ENCODE measurements at regions of chr11 and their contacts with region 1.

Region 1: GRCh38 chr11:112555491-112556364 is 295.1 kb upstream of the PLET1 start:
- DNase-seq: peak; percentile 21
- ATAC-seq: peak; percentile 95
- H3K4me3 ChIP-seq: no peak overlapping the region
- H3K27ac ChIP-seq: no peak overlapping the region
- H3K4me1 ChIP-seq: no peaks in the 10 kb centered on the region
- H3K27me3 ChIP-seq: peaks cover 1 to 5% of the 10 kb centered on the region in 2 experiments; a peak in 2 of 5 replicates
- CTCF ChIP-seq: peak; percentile 83
- EP300 ChIP-seq: no peak
- POLR2A ChIP-seq: no peak
- RAD21 ChIP-seq: peak; percentile 40

Region 2: DNA sequence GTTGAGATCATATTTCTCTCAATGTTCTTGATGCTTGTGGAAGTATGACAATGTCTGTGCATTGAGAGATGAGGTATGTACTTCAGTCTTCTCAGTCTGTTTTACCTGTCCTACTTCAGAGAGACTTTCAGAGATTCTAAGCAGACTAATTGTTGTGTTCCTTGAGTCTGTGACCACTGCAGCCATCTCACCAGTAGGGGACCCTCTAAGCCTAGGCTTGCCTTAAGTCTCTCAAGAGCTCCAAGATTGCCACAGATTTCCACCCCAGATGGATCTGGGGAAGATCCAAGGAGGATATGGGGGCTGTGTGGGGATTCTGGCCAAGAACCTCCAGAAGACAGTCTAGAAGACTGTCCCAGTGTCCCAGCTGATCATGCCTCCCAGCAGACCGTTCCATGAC is 115.2 kb before region 1 on chr11:
- CTCF ChIA-PET with region 1: interaction called, 4 read pairs
- POLR2A ChIA-PET with region 1: no interaction called
- in situ Hi-C with region 1: no loop called
- intact Hi-C with region 1: loop called (anchors 5 kb)
- DNase-seq: no peak
- ATAC-seq: no peak
- H3K4me3 ChIP-seq: no peak overlapping the region
- H3K27ac ChIP-seq: no peak overlapping the region
- H3K4me1 ChIP-seq: no peaks in the 10 kb centered on the region
- H3K27me3 ChIP-seq: no peaks in the 10 kb centered on the region; a peak in 1 of 5 replicates
- CTCF ChIP-seq: peak; percentile 42
- EP300 ChIP-seq: no peak
- POLR2A ChIP-seq: no peak
- RAD21 ChIP-seq: no peak

Region 3: DNA sequence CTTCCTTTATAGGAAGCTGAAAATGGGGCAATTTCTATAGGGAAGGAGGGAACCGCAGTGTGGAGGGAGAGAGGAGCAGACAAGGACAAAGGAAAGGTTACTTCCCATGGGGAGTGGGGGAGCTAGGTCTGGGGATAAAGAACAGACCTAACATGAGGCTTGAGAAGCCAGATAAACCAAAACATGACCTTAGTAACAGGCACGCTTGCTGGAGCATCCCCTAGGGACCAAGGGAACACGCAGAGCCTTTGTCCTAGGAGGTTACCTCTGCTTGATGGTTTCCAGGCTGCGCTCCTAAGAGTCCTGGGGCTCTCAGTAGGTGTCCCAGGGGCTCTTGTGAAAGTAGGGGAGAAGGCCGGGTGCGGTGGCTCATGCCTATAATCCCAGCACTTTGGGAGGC is 134.1 kb after region 1 on chr11:
- CTCF ChIA-PET with region 1: no interaction called
- POLR2A ChIA-PET with region 1: no interaction called
- in situ Hi-C with region 1: no loop called
- intact Hi-C with region 1: no loop called
- DNase-seq: no peak
- ATAC-seq: no peak
- H3K4me3 ChIP-seq: no peak overlapping the region
- H3K27ac ChIP-seq: no peak overlapping the region
- H3K4me1 ChIP-seq: no peaks in the 10 kb centered on the region
- H3K27me3 ChIP-seq: peaks cover 0 to 6% of the 10 kb centered on the region in 2 experiments; a peak in 1 of 5 replicates
- CTCF ChIP-seq: no peak
- EP300 ChIP-seq: no peak
- POLR2A ChIP-seq: no peak
- RAD21 ChIP-seq: no peak

Region 4: DNA sequence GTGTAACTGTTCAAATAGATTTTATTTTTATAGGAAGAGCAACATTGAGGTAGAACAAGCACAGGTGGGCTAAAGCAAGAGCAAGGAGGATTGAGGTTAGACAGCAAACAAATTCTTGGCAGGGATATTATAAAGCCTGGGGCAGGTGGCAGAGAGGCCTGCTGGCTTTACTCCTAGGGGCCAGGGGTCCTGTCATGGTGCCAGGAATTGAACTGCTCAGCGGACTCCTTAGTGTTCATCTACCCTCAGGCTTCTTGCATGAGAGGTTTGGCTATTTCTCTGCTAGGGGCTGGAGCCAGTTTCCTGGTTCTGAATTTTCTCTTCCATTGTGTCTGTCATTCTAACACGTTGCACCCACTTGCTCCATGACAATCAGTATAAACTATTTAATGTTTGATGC is 188.3 kb after region 1 on chr11:
- CTCF ChIA-PET with region 1: no interaction called
- POLR2A ChIA-PET with region 1: no interaction called
- in situ Hi-C with region 1: no loop called
- intact Hi-C with region 1: no loop called
- DNase-seq: no peak
- ATAC-seq: no peak
- H3K4me3 ChIP-seq: no peak overlapping the region
- H3K27ac ChIP-seq: no peak overlapping the region
- H3K4me1 ChIP-seq: no peaks in the 10 kb centered on the region
- H3K27me3 ChIP-seq: peaks cover 6 to 22% of the 10 kb centered on the region in 2 experiments; a peak in 4 of 5 replicates
- CTCF ChIP-seq: no peak
- EP300 ChIP-seq: no peak
- POLR2A ChIP-seq: no peak
- RAD21 ChIP-seq: no peak

Measured in HepG2 (cell line).